WTC11 (cell line): ENCODE measurements at regions of chr15 and their contacts with region 1.

Region 1: GRCh38 chr15:59528965-59529402 is 82.6 kb upstream of the GCNT3 start:
- DNase-seq: peak; percentile 93
- ATAC-seq: peak; percentile 96
- H3K4me3 Mint-ChIP-seq: no peak overlapping the region
- H3K27ac Mint-ChIP-seq: no peak overlapping the region
- H3K4me1 Mint-ChIP-seq: peaks cover 12% of the 10 kb centered on the region
- H3K27me3 Mint-ChIP-seq: no peaks in the 10 kb centered on the region; the same call in 1 of the 2 replicates
- CTCF ChIP-seq: peak; percentile 74

Region 2: GRCh38 chr15:59174835-59175831 is 353.9 kb before region 1 on chr15:
- CTCF ChIA-PET with region 1: interaction called, 22 read pairs
- POLR2A ChIA-PET with region 1: no interaction called
- DNase-seq: peak; percentile 65
- ATAC-seq: peak; percentile 96
- H3K4me3 Mint-ChIP-seq: no peak overlapping the region
- H3K27ac Mint-ChIP-seq: peak overlapping the region; percentile 78
- H3K4me1 Mint-ChIP-seq: peaks cover 8% of the 10 kb centered on the region
- H3K27me3 Mint-ChIP-seq: no peaks in the 10 kb centered on the region
- CTCF ChIP-seq: no peak

Region 3: DNA sequence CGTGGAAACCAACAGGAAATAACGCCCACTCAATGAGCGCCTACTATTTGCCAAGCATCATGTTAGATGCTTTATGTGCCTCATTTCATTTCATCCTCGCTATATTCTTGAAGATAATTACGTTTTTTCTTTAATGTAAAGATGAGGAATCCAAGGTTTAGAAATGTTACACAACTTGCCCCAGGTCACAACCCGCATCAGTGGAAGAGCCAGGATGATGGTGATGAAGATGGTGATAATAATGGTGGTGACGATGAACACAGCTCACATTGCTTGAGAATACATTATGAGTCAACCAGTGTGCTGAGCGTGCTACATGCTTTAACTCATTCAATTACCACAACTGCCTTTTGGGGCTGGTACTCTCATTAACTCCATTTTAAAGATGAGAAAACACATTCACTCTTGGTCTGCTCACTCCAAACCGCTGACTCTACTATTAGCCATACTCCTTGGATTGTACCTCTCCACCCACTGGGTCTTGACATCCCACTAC is 134.8 kb before region 1 on chr15:
- CTCF ChIA-PET with region 1: no interaction called
- POLR2A ChIA-PET with region 1: no interaction called
- DNase-seq: no peak
- ATAC-seq: no peak
- H3K4me3 Mint-ChIP-seq: no peak overlapping the region
- H3K27ac Mint-ChIP-seq: no peak overlapping the region
- H3K4me1 Mint-ChIP-seq: peaks cover under 1% of the 10 kb centered on the region; the same call in 1 of the 2 replicates
- H3K27me3 Mint-ChIP-seq: peaks cover 23% of the 10 kb centered on the region
- CTCF ChIP-seq: no peak

Region 4: GRCh38 chr15:59492389-59493377 is 36.3 kb before region 1 on chr15:
- CTCF ChIA-PET with region 1: interaction called, 29 read pairs
- POLR2A ChIA-PET with region 1: no interaction called
- DNase-seq: peak; percentile 63
- ATAC-seq: peak; percentile 95
- H3K4me3 Mint-ChIP-seq: peak overlapping the region; percentile 46
- H3K27ac Mint-ChIP-seq: no peak overlapping the region
- H3K4me1 Mint-ChIP-seq: peaks cover 9% of the 10 kb centered on the region
- H3K27me3 Mint-ChIP-seq: peaks cover 4% of the 10 kb centered on the region
- CTCF ChIP-seq: peak; percentile 64

Region 5: GRCh38 chr15:59516655-59517461 is 12.1 kb before region 1 on chr15:
- CTCF ChIA-PET with region 1: interaction called, 42 read pairs
- POLR2A ChIA-PET with region 1: no interaction called
- DNase-seq: no peak
- ATAC-seq: no peak
- H3K4me3 Mint-ChIP-seq: no peak overlapping the region
- H3K27ac Mint-ChIP-seq: no peak overlapping the region
- H3K4me1 Mint-ChIP-seq: no peaks in the 10 kb centered on the region
- H3K27me3 Mint-ChIP-seq: no peaks in the 10 kb centered on the region; the same call in 1 of the 2 replicates
- CTCF ChIP-seq: no peak

Region 6: GRCh38 chr15:59549339-59549807 is 20.4 kb after region 1 on chr15:
- CTCF ChIA-PET with region 1: interaction called, 20 read pairs
- POLR2A ChIA-PET with region 1: no interaction called
- DNase-seq: peak; percentile 34
- ATAC-seq: peak; percentile 86
- H3K4me3 Mint-ChIP-seq: no peak overlapping the region
- H3K27ac Mint-ChIP-seq: peak overlapping the region; percentile 13; the same call in 1 of the 2 replicates
- H3K4me1 Mint-ChIP-seq: peaks cover 24% of the 10 kb centered on the region
- H3K27me3 Mint-ChIP-seq: peaks cover 94% of the 10 kb centered on the region
- CTCF ChIP-seq: no peak

Region 7: GRCh38 chr15:59622289-59622688 is 93.3 kb after region 1 on chr15:
- CTCF ChIA-PET with region 1: interaction called, 46 read pairs
- POLR2A ChIA-PET with region 1: no interaction called
- DNase-seq: peak; percentile 69
- ATAC-seq: peak; percentile 97
- H3K4me3 Mint-ChIP-seq: no peak overlapping the region
- H3K27ac Mint-ChIP-seq: no peak overlapping the region
- H3K4me1 Mint-ChIP-seq: no peaks in the 10 kb centered on the region; the same call in 1 of the 2 replicates
- H3K27me3 Mint-ChIP-seq: peaks cover 7% of the 10 kb centered on the region
- CTCF ChIP-seq: no peak; the same call in 1 of the 2 replicates

Region 8: GRCh38 chr15:59656897-59657634 is 128.1 kb after region 1 on chr15 and contains the start of gene GTF2A2:
- CTCF ChIA-PET with region 1: interaction called, 13 read pairs
- POLR2A ChIA-PET with region 1: interaction called, 3 read pairs
- DNase-seq: peak; percentile 95
- ATAC-seq: peak; percentile 100
- H3K4me3 Mint-ChIP-seq: no peak within 1 kb of the TSS
- H3K27ac Mint-ChIP-seq: peak within 1 kb of the TSS; percentile 64
- H3K4me1 Mint-ChIP-seq: no peaks in the 10 kb centered on the region
- H3K27me3 Mint-ChIP-seq: no peaks in the 10 kb centered on the region
- CTCF ChIP-seq: no peak
- total RNA-seq, gene GTF2A2: 120 to 130 TPM (median 129 TPM) in 3 replicates